ENCODE measurements at regions of chr3 and their contacts with region 1.

Region 1: DNA sequence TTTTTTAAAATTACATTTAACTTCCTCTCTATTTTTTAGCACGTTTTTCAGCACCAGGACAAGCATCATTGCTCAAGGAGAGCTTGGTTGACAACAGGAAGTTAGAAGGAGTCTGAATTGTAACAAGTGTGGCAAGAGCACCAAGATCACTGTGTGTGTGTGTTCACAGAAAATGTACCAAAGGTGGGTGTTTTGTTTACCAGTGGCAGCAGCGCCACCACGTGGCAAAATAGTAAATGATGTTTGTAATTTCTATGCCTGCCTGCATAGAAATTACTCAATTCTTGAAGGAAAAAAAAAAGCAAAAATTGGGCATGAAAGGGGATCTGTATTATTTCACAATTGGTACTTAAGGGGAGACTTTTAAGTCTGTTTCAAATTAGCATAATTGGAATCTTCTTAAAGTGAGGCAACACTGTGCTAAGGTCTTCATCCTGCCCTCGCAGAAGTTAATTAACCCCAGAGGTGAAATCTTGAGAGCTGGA is 7.4 kb upstream of the U2SURP start:
- DNase-seq: peak in 2 of 3 donors; percentile 51 to 67
- ATAC-seq: peak; percentile 81 to 93 (median 90)
- H3K4me3 ChIP-seq: no peak overlapping the region
- H3K27ac ChIP-seq: no peak overlapping the region
- H3K4me1 ChIP-seq: no peaks in the 10 kb centered on the region
- H3K27me3 ChIP-seq: no peaks in the 10 kb centered on the region
- CTCF ChIP-seq: peak; percentile 53 to 77 (median 70)
- POLR2A ChIP-seq: no peak

Region 2: DNA sequence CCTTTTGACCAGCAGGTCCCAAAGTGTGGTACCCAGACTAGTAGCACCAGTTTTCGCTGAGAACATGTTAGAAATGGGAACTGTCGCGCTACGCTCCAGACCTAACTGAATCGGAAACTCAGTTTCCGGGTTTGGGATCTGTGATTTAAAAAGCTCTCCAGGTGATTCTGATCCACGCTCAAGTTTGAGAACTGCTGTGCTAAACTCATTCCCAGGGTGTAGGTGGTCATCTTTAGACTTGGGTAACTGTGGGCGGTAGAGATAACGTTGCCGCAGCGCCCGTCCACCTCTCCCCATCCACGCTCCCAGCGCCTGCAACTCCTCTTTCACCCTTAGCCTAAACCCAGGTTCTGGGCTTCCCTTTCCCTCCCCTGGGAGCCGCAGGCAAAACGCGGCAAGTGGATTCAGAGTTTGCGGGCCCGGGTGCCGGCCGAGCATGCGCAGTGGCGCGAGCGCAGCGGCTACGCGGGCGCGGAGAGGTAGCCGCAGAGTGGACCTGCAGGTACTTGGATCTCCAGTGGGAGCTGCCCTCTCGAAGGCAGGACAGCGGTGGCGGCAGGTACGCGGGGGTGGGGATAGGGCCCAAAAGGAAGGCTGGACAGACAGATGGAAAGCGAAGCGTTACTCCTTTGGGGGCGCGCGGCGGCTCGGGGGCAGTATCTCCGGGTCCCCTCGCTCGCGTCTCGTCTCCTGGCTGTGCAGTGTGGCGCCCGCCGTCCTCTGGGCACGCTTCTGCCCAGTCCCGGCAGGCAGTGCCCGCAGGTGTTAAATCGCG is 397.9 kb before region 1 on chr3 and contains the start of gene PLS1:
- intact Hi-C with region 1: loop called in 1 of 2 experiments (anchors 10 kb)
- DNase-seq: peak; percentile 87 to 93 (median 92)
- ATAC-seq: peak; percentile 93 to 97 (median 94)
- H3K4me3 ChIP-seq: peak within 1 kb of the TSS; percentile 74 to 77 (median 77)
- H3K27ac ChIP-seq: peak within 1 kb of the TSS; percentile 60 to 81 (median 63)
- H3K4me1 ChIP-seq: peaks cover 0 to 6% (median 0%) of the 10 kb centered on the region in 4 donors
- H3K27me3 ChIP-seq: no peaks in the 10 kb centered on the region
- CTCF ChIP-seq: peak in 2 of 4 donors; percentile 6 to 26
- POLR2A ChIP-seq: peak; percentile 89
- total RNA-seq, gene PLS1: 13.0 to 30.5 (median 18.2) TPM

Region 3: GRCh38 chr3:142828703-142829305 is 165.2 kb before region 1 on chr3:
- intact Hi-C with region 1: loop called (anchors 5 to 10 kb)
- DNase-seq: peak; percentile 82 to 85 (median 84)
- ATAC-seq: peak; percentile 100
- H3K4me3 ChIP-seq: no peak overlapping the region
- H3K27ac ChIP-seq: no peak overlapping the region
- H3K4me1 ChIP-seq: no peaks in the 10 kb centered on the region
- H3K27me3 ChIP-seq: no peaks in the 10 kb centered on the region
- CTCF ChIP-seq: peak; percentile 86 to 95 (median 92)
- POLR2A ChIP-seq: no peak

Region 4: DNA sequence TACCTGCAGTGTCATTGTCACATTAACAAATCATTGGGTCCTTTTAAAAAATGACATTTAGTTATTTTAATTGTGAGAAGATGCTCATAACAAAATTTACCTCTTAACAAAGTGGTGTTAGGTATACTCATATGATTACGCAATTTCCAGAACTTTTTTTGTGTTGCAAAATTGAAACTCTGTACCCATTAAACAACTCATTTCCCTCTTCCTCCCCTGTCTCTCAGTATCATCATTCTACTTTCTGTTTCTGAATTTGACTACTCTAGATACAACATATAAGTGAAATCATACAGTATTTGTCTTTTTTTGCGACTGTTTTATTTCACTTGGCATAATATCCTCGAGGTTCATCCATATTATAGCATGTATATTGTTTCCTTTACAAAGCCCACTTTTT is 66.9 kb after region 1 on chr3:
- intact Hi-C with region 1: no loop called
- DNase-seq: no peak
- ATAC-seq: peak; percentile 76 to 85 (median 76)
- H3K4me3 ChIP-seq: no peak overlapping the region
- H3K27ac ChIP-seq: peak overlapping the region in 2 of 3 donors; percentile 22 to 62
- H3K4me1 ChIP-seq: peaks cover 0 to 11% (median 3%) of the 10 kb centered on the region in 4 donors
- H3K27me3 ChIP-seq: no peaks in the 10 kb centered on the region
- CTCF ChIP-seq: no peak
- POLR2A ChIP-seq: no peak

Region 5: DNA sequence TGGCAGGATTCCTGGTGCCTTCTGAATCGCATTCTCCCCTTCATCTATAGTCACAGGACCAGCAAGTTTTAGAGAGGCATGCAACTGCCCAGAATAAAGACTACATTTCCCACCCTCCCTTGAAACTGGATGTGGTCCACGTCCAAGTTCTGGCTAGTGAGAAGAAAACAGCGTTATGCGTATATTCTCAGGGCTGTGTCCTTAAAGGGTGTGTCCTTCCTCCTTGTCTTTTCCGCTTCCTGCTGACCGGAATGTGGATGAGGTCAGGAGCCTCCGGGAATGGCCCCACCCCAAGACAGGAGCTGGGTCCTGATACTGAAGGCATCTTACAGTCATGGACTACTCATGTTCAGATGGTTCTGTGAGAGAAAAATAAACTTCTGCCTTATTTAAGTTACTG is 145.8 kb after region 1 on chr3:
- intact Hi-C with region 1: no loop called
- DNase-seq: no peak
- ATAC-seq: peak; percentile 29 to 58 (median 54)
- H3K4me3 ChIP-seq: no peak overlapping the region
- H3K27ac ChIP-seq: no peak overlapping the region
- H3K4me1 ChIP-seq: no peaks in the 10 kb centered on the region
- H3K27me3 ChIP-seq: no peaks in the 10 kb centered on the region
- CTCF ChIP-seq: no peak
- POLR2A ChIP-seq: no peak